Activated T-helper 1 cell treated with anti-CD3 and anti-CD28 coated beads, Interleukin-12 subunit alpha, Interleukin-12 subunit beta, Interleukin-2, Interleukin-4 antibody, amounts not matched to agents 30 ng/mL and 10 ng/mL and 1 ng/mL, durations not matched to agents 14 hours and 24 hours and 36 hours (primary cell): ENCODE measurements at regions of chr6 and their contacts with region 1.

Region 1: GRCh38 chr6:11093589-11094410 is at the start of gene SMIM13:
- DNase-seq: peak; percentile 94
- H3K4me3 Mint-ChIP-seq: peak within 1 kb of the TSS; percentile 92
- H3K27ac Mint-ChIP-seq: peak within 1 kb of the TSS; percentile 97
- H3K4me1 Mint-ChIP-seq: peaks cover 31% of the 10 kb centered on the region
- H3K27me3 Mint-ChIP-seq: no peaks in the 10 kb centered on the region
- total RNA-seq, gene SMIM13: 14.6 and 18.4 TPM in 2 replicates

Region 2: DNA sequence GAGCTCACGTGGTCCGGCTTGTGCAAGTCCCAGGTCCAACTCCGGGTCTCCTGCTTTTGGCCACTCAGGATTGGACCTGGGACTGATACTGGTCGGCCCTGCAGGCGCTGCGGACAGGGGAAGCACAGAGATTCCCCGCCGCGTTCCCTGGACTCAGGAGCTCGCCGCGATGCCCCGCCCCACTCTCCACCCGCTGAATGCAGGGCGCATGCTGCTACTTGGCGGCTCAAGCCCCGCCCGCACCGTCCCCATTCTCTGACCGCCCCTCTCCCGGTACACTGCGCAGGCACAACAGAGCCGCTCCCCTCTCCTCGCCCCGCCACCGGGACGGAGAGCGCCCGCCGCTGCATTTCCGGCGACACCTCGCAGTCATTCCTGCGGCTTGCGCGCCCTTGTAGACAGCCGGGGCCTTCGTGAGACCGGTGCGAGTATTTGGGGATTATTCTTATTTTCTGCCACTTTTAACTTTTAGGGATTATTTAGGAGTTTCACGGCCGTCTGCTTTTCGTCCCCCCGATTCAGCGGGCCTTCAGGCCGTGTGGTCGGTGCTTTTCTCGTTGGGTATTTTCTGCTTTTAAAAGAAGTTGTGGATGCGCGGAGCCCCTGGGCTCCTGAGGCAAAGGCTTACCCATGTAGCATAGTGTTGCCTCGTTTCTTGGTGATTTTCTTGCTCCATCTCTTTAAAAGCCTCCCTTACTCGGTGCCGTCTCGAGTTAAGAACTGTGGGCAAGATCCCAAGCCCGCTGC is 370.8 kb before region 1 on chr6 and contains the start of gene TMEM14C:
- intact Hi-C with region 1: loop called (anchors 1 kb)
- DNase-seq: peak; percentile 88
- H3K4me3 Mint-ChIP-seq: peak within 1 kb of the TSS; percentile 91
- H3K27ac Mint-ChIP-seq: peak within 1 kb of the TSS; percentile 93
- H3K4me1 Mint-ChIP-seq: peaks cover 55% of the 10 kb centered on the region
- H3K27me3 Mint-ChIP-seq: no peaks in the 10 kb centered on the region
- total RNA-seq, gene TMEM14C: 57.3 and 63.1 TPM in 2 replicates

Region 3: DNA sequence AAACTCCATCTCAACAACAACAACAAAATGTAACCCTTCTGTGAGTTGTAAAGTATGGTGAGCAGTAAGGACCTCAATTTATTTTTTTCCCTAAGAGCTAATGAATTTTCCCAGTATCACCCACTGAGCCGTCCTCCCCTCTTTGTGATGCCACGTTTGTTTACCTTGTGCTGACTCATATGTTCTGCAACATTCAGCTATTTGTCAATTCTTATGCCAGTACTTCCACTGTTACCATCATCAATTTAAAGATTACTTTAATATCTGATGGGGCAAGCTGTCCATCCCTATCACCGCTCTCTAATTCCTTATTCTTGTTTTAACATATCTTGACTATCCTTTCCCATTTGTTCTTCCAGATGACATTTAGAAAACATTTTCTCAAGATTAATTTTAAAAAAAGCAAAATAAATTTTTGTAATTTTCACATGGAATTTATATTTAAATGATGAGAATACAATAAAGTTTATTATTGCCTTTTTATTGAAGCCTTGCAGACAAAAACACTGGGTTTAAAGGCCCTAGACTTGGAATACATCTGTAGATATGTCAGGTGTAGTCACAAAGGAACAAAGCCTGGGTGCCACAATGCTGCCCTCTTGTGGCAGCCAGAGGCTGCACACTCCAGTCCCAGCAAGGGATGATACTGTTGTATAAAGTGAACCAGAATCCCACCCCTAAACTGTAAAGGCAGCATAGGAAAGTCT is 292.8 kb before region 1 on chr6:
- intact Hi-C with region 1: no loop called
- DNase-seq: peak; percentile 48
- H3K4me3 Mint-ChIP-seq: no peak overlapping the region
- H3K27ac Mint-ChIP-seq: no peak overlapping the region
- H3K4me1 Mint-ChIP-seq: no peaks in the 10 kb centered on the region
- H3K27me3 Mint-ChIP-seq: no peaks in the 10 kb centered on the region

Region 4: DNA sequence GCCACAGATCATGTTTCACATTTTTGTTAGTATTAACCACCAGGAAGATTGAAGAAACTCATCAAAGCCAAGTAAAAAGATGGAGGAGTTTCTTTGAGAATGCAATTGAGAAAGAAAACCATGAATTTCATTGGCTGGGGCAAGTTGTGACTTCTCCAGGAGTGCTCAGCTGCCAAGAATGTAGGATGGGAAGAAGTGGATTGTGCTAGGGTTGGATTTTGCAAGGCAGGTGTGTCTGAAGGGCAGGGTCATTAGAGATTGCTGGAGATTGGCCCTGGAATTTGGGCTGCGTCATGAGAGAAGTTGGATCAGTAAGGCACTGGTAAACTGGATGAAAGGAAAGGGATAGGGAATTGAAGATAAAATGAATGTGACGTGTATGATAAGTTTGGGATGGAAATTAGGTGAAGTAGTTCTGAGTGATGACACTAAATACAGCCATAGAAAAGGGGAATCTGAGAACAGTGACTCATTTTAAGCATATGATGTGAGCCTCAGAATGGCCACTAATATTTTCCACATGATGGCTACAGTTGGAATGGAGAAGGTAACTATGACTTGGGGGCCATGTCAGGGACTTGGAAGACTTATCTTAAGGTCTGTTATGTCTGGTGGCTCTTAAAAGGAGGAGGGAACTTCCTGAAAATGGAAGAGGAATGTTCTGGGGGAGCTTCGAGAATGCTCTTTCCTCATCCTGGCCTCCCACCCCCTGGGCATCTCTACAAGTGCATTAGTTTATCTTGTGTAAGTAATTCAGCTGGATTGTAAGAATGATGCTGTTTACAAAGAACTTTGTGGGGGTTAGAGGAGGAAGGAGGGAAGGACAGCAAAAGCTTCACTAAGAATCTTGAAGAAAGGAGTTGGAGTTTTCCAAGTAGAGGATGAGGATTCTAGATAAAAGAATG is 45.5 kb after region 1 on chr6:
- intact Hi-C with region 1: loop called (anchors 1 kb)
- DNase-seq: no peak
- H3K4me3 Mint-ChIP-seq: no peak overlapping the region
- H3K27ac Mint-ChIP-seq: peak overlapping the region; percentile 1
- H3K4me1 Mint-ChIP-seq: peaks cover 18% of the 10 kb centered on the region
- H3K27me3 Mint-ChIP-seq: peaks cover 1% of the 10 kb centered on the region

Region 5: DNA sequence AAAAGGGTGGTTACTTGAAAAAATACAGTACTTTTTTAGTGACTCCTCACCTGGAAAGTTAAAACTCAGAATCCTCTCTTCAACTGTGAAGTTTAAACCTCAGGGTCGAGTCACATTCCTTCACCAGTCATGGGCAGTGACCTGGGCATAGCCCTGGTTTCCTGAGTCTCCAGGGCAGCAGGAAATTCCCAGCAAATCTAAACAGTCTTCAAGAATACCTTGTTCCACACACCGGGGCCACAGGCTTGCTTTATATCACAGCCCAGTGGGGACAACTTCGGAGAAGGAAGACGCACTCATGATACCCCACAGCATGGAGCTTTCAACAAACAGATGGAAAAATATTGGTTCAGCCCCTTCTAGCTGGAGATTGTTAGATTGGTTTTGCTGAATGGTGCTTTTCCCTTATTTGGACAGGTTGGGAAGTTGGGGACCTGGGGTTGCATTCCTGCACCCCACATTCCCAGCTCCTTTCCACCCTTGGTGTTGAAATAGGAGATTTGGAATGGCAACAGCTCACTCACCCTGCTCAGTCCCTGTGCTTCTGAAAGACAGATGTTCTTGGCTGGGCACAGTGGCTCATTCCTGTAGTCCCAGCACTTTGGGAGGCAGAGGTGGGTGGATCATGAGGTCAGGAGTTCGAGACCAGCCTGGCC is 330.7 kb after region 1 on chr6:
- intact Hi-C with region 1: loop called (anchors 5 kb)
- DNase-seq: no peak
- H3K4me3 Mint-ChIP-seq: no peak overlapping the region
- H3K27ac Mint-ChIP-seq: peak overlapping the region; percentile 7
- H3K4me1 Mint-ChIP-seq: peaks cover 63% of the 10 kb centered on the region
- H3K27me3 Mint-ChIP-seq: no peaks in the 10 kb centered on the region

Region 6: DNA sequence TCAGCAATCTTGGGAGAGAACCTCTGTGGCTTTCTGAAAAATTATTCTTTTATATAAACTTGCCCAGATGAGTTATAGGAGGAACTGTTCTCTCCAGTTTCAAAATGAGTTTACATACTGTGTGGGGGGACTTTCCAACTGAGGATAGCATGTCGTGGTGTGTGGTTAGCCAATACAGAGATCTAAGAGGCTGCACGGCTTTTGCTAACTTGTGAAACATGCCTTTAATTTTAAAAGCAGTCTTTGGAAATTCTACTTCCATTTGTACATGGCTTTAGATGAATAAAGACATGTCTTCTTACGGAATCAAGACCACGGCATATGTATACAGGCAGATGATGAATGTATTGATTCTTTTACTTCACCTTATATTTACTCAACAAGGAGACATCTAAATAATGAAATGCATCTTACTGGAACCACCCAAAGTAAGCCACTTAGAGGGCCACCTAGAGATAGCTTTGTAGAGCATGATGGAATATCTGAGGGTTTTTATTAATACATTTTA is 958.1 kb after region 1 on chr6:
- intact Hi-C with region 1: loop called (anchors 10 kb)
- DNase-seq: peak; percentile 76
- H3K4me3 Mint-ChIP-seq: peak overlapping the region; percentile 78
- H3K27ac Mint-ChIP-seq: peak overlapping the region; percentile 96
- H3K4me1 Mint-ChIP-seq: peaks cover 77% of the 10 kb centered on the region
- H3K27me3 Mint-ChIP-seq: no peaks in the 10 kb centered on the region